Pancreas (tissue), 10 donors: ENCODE measurements at regions of chr1 and their contacts with region 1.

Region 1: DNA sequence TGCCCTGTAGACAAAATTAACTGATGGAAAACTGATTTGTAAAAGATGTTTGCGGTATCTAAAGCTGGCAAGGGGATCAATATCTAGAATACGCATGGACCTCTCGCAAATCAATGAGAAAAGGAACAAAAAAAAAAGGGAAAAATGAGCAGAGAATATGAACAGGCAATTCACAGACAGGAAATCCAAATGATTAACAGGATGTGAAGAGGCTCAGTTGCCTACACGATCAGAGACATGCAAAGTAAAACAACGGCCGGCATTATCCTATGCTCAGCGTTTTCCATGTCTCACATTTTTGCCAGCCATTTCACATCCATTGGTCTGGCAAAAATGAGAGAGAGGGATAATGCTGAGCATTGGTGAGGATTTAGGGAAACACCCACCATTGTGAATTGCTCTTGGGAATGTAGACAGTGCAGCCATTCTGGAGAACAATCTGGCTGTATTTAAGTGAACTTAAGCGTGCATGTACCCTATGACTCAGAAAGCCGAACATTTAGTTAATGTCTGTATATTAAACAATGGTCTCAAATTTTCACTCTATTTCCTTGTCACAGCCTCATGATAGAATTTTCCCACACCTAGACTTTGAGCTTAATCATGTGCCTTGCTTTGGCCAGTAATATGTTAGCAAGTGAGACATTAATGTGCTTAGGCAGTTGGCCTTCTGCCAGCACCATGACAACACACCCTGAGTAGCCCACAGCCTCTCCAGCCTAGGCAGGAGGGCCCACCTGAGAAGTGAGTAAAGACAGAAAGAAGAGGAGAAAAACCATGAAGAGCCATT is 61.0 kb upstream of the NBPF3 start:
- DNase-seq: peak in 1 of 6 donors; percentile 26
- ATAC-seq: peak in 3 of 4 donors; percentile 40 to 79 (median 78)
- H3K4me3 ChIP-seq: no peak overlapping the region
- H3K27ac ChIP-seq: no peak overlapping the region
- H3K4me1 ChIP-seq: no peaks in the 10 kb centered on the region
- H3K27me3 ChIP-seq: no peaks in the 10 kb centered on the region
- CTCF ChIP-seq: no peak

Region 2: DNA sequence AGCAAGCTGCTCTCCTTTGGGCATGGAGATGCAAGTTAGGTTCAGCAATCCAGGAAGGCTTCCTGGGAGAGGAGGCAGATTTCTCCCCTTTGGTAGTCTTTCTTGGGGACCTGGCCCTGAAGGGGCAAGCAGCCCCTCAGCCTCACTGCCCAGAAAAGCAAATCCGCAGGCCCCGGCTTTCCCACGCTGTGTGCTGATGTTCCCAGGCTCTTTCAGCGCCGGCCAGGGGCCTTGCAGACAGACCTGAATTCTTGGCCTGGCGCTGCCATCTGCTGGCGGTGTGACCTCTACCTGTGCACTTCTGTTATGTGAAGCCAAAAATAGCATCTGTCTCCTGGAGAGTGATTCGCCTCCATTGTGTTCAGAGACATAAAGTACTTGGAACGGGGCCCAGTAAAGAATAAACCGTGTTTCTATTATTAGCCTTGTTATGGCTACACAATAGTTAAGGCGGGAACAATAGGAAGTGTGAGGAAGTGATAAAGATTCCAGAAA is 195.1 kb after region 1 on chr1:
- intact Hi-C with region 1: loop called in 2 of 3 experiments (anchors 10 kb)
- DNase-seq: peak in 5 of 6 donors; percentile 54 to 81 (median 73)
- ATAC-seq: peak; percentile 81 to 94 (median 90)
- H3K4me3 ChIP-seq: no peak overlapping the region
- H3K27ac ChIP-seq: no peak overlapping the region
- H3K4me1 ChIP-seq: no peaks in the 10 kb centered on the region
- H3K27me3 ChIP-seq: no peaks in the 10 kb centered on the region
- CTCF ChIP-seq: peak in 1 of 4 donors; percentile 24

Region 3: GRCh38 chr1:21659099-21659923 is 280.4 kb after region 1 on chr1:
- intact Hi-C with region 1: loop called in 1 of 3 experiments (anchors 10 kb)
- DNase-seq: peak; percentile 63 to 94 (median 86)
- ATAC-seq: peak; percentile 81 to 91 (median 90)
- H3K4me3 ChIP-seq: peak overlapping the region in 1 of 4 donors; percentile 23
- H3K27ac ChIP-seq: no peak overlapping the region
- H3K4me1 ChIP-seq: peaks cover 0 to 12% (median 0%) of the 10 kb centered on the region in 3 donors
- H3K27me3 ChIP-seq: no peaks in the 10 kb centered on the region
- CTCF ChIP-seq: peak; percentile 93 to 98 (median 96)